SK-N-SH (cell line): ENCODE measurements at regions of chr6 and their contacts with region 1.

Region 1: GRCh38 chr6:155327326-155328073 is 13.2 kb upstream of the TFB1M start:
- DNase-seq: peak; percentile 35
- H3K4me3 ChIP-seq: no peak overlapping the region
- H3K27ac ChIP-seq: peak overlapping the region in 1 of 2 experiments; percentile 24; a peak in 2 of 4 replicates
- H3K4me1 ChIP-seq: peaks cover 0 to 9% of the 10 kb centered on the region in 2 experiments; a peak in 1 of 4 replicates
- H3K27me3 ChIP-seq: no peaks in the 10 kb centered on the region
- CTCF ChIP-seq: peak; percentile 76
- EP300 ChIP-seq: 0 out of 4 replicates have a peak, but pooled peaks of 1 of the 2 experiments have one; percentile 24
- RAD21 ChIP-seq: peak; percentile 96

Region 2: GRCh38 chr6:155314773-155315515 is 12.6 kb before region 1 on chr6:
- CTCF ChIA-PET with region 1: interaction called, 12 read pairs
- POLR2A ChIA-PET with region 1: no interaction called
- DNase-seq: peak; percentile 46
- H3K4me3 ChIP-seq: peak overlapping the region; percentile 95 to 99
- H3K27ac ChIP-seq: peak overlapping the region; percentile 83 to 97
- H3K4me1 ChIP-seq: peaks cover 15 to 22% of the 10 kb centered on the region in 2 experiments
- H3K27me3 ChIP-seq: no peaks in the 10 kb centered on the region
- CTCF ChIP-seq: no peak
- EP300 ChIP-seq: peak in 1 of 2 experiments; percentile 38; a peak in 1 of 4 replicates
- RAD21 ChIP-seq: no peak

Region 3: DNA sequence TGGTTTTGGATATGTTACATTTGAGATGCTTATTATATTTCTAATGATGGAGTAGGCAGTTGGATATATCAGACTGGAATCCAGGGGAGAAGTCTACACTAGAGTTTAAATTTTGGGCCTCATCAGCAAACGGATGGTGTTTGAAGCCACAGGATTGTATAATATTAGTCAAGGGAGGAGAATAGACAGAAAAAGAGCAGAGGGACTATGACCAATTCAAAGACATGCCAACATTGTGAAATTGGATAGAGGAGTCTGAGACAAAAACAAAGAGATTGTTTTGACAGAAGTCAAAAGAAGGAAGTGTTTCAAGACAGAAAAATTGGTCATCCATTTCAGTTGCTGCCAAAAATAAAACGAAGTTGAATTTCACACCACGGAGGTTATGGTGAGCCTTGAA is 61.6 kb after region 1 on chr6:
- CTCF ChIA-PET with region 1: no interaction called
- POLR2A ChIA-PET with region 1: no interaction called
- DNase-seq: no peak
- H3K4me3 ChIP-seq: no peak overlapping the region
- H3K27ac ChIP-seq: no peak overlapping the region
- H3K4me1 ChIP-seq: peaks cover 0 to 2% of the 10 kb centered on the region in 2 experiments; a peak in 1 of 4 replicates
- H3K27me3 ChIP-seq: no peaks in the 10 kb centered on the region
- CTCF ChIP-seq: no peak
- EP300 ChIP-seq: no peak
- RAD21 ChIP-seq: no peak

Region 4: DNA sequence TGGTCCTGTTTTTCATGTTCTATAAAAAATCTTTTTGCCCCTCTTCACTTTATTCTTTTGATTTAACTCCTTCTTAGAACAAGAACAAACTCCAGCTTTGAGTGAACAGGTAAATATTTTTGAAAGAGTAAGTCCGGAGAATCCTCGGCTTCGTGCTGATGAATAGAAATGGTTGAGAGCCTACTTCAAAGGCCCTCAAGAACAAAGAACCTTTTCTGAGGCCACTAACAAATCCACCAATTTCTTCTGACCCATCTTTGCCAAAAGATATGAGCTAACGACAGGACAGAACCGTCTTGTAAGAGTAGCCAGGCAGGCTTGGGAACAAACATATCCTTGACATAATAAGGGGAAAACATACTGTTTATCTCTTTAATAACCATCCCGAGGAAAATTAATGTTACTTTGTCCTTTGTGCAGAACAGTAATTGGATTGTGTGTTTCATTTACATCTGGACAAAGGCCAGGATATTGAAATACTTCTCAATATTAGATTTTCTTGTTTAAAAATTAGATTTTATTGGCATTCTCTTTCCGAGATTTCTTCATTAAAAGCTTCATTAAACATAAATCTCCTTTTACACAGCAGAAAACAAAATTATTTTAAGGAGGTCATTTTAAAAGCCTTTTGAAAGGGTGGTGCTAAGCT is 75.3 kb after region 1 on chr6:
- CTCF ChIA-PET with region 1: interaction called, 11 read pairs
- POLR2A ChIA-PET with region 1: no interaction called
- DNase-seq: no peak
- H3K4me3 ChIP-seq: no peak overlapping the region
- H3K27ac ChIP-seq: peak overlapping the region in 1 of 2 experiments; percentile 87; a peak in 2 of 4 replicates
- H3K4me1 ChIP-seq: peaks cover 0 to 32% of the 10 kb centered on the region in 2 experiments; a peak in 2 of 4 replicates
- H3K27me3 ChIP-seq: no peaks in the 10 kb centered on the region
- CTCF ChIP-seq: no peak
- EP300 ChIP-seq: peak in 1 of 2 experiments; percentile 87; a peak in 2 of 4 replicates
- RAD21 ChIP-seq: peak; percentile 17; the same call in 1 of the 2 replicates

Region 5: DNA sequence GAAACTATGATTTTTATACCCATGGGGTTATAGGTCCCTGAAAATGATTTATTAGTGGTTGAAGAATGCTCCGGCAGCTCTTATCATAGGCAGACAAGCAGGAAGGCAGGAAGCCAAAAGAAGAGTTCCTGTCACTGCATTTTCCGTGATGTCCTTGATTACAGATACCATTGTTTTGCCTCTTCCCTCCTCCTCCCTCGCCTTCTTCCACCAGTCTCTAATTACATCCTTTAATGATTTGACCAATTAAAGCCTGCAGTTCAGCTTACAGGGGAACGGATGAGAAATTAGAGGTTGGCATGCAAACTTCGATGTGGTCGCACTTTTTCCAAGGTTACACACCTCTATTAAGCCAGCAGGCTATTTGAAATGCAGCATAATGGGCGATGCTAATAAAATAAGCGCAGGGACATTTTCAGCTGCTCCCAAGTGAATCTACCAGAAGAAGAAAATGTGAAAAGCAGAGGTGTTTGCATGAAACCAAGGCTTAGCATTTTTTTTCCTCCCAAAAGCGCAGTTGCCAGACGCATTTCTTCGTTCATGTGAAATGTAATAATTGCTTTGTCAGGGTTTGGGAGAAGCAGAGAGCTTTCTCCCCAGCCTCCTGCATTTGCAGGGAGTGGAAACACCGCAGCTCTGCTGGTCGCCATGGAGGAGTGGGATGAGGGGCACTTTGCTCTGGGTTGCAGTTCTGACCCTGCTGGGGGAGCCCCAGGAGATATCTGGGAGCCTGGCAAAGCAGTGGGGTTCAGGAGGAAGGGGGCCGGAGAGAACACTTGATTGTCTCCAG is 122.1 kb after region 1 on chr6:
- CTCF ChIA-PET with region 1: interaction called, 10 read pairs
- POLR2A ChIA-PET with region 1: no interaction called
- DNase-seq: peak; percentile 36
- H3K4me3 ChIP-seq: no peak overlapping the region; a peak in 1 of 4 replicates
- H3K27ac ChIP-seq: peak overlapping the region in 1 of 2 experiments; percentile 93; a peak in 2 of 4 replicates
- H3K4me1 ChIP-seq: peaks cover 8 to 27% of the 10 kb centered on the region in 2 experiments; a peak in 3 of 4 replicates
- H3K27me3 ChIP-seq: no peaks in the 10 kb centered on the region
- CTCF ChIP-seq: no peak
- EP300 ChIP-seq: peak in 1 of 2 experiments; percentile 45; a peak in 1 of 4 replicates
- RAD21 ChIP-seq: no peak